ENCODE measurements at regions of chr19 and their contacts with region 1.

Region 1: DNA sequence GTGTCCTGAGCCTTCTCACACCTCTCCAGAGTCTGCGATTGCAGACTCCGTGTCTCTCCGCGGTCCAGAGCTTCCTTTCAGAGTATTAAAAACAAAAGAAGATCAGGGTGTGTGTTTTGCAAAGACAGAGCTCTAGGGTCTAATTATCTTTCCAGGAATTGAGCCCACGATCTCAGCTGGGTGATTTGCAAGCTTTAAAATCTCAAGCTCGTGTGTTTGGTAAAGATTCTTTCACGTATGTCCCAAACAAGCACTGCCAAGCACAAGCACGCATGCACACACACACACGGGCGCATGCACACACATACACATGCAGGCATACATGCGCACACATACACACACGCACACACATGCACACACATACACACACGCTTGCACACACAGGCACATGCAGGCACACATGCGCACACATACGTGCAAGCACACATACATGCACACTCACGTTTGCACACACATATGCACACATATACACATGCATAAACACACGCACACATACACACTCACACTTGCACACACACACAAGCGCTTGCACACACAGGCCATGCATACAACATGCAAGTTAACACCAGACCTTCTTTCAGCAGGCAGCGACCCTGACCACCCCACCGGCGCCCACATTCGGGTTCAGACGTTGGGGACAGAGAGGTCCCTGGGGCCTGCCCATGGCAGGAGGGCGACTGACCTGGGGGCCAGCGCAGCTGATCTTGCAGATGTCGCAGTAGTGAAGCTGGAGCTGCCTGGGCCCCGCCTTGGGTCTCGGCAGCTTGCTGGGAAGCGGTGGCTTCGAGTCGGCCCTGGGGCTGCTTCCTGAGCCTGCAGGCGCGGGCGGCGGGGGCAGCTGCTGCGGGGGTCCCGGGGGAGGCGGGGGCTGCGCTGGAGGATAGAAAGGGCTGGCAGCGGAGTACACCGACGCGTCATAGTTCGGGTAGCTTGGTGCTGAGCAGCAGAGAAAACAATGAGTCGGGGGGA is 37.9 kb downstream of the ZFR2 start:
- DNase-seq: no peak
- H3K4me3 ChIP-seq: no peak overlapping the region
- H3K27ac ChIP-seq: no peak overlapping the region
- H3K4me1 ChIP-seq: no peaks in the 10 kb centered on the region
- H3K27me3 ChIP-seq: no peaks in the 10 kb centered on the region
- CTCF ChIP-seq: no peak

Region 2: GRCh38 chr19:3808420-3809143 is 22.3 kb before region 1 on chr19:
- CTCF ChIA-PET with region 1: interaction called, 10 read pairs
- POLR2A ChIA-PET with region 1: no interaction called
- intact Hi-C with region 1: no loop called
- DNase-seq: no peak
- H3K4me3 ChIP-seq: no peak overlapping the region
- H3K27ac ChIP-seq: no peak overlapping the region
- H3K4me1 ChIP-seq: no peaks in the 10 kb centered on the region
- H3K27me3 ChIP-seq: no peaks in the 10 kb centered on the region
- CTCF ChIP-seq: no peak

Region 3: GRCh38 chr19:4051175-4052049 is 220.5 kb after region 1 on chr19:
- CTCF ChIA-PET with region 1: no interaction called
- POLR2A ChIA-PET with region 1: no interaction called
- intact Hi-C with region 1: no loop called
- DNase-seq: no peak
- H3K4me3 ChIP-seq: no peak overlapping the region
- H3K27ac ChIP-seq: no peak overlapping the region
- H3K4me1 ChIP-seq: no peaks in the 10 kb centered on the region
- H3K27me3 ChIP-seq: no peaks in the 10 kb centered on the region
- CTCF ChIP-seq: no peak

Measured in A673 (cell line).